H1 (cell line): ENCODE measurements at regions of chr4 and their contacts with region 1.

Region 1: DNA sequence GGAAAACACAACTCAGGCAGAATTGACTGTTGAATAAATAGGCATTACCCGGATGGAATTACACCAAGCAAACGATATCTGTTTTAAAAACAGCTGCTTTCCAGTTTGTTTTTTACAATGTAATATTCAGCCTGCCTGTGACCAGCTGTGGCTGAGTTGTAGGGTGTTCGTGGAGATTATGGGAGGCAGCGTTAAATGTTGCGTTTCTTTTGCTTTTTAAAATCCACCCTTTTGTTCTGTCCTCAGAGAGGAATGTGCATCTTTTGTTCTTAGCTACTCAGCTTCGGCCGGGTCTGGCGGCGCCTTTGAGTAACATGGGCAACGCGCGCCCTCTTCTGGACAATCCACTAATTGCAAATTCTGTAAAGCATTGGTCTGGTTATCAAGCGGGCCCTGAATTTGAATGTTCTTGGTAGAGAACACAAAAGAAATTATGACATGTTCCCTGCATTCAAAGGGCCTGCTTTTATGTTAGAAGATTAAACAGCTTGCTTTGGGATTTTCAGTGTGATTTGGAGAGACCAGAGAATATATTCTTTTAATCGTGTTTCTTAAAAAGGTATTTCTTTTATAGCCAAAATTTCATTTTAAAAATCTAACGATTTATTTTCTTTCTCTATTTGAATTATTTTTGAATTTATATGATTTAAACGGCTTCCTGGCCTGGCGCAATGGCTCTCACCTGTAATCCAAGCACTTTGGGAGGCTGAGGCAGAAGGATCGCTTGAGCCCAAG is 76.3 kb upstream of the TRIM2 start:
- DNase-seq: peak; percentile 63 to 96
- H3K4me3 ChIP-seq: peak overlapping the region in 3 of 4 experiments; percentile 3 to 42 (median 19); a peak in 4 of 8 replicates
- H3K27ac ChIP-seq: peak overlapping the region; percentile 1; the same call in 1 of the 2 replicates
- H3K4me1 ChIP-seq: peaks cover 0 to 7% (median 4%) of the 10 kb centered on the region in 4 experiments; a peak in 3 of 7 replicates
- H3K27me3 ChIP-seq: no peaks in the 10 kb centered on the region
- CTCF ChIP-seq: peak; percentile 42 to 84 (median 70)
- EP300 ChIP-seq: no peak
- POLR2A ChIP-seq: no peak
- RAD21 ChIP-seq: peak; percentile 94 to 97

Region 2: DNA sequence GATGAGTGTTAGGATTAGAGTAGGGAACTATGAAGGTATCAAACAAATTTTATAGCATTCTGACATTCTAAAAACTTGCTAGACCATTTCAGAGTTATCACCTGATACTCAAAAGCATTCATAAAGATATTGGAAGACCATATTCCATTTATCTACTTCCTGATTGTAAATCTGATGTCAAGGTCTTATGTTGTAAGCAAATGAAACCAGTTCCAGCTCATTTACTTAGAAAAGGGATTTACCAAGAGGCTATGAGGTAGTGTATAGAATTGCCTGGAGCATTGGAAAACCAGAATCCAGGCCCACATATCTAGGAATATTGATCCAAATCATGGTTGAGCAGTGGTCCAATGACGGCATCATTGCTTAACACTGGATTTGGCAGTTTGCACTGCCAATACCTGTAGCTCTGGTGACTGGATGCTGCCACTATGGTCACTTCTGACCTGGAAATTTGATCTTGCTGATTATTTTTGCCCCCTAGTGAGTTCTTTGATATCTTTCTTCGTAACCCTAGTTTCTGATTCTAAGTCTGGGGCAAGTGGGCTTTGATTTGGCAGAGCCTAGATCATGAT is 322.8 kb before region 1 on chr4:
- CTCF ChIA-PET with region 1: no interaction called
- POLR2A ChIA-PET with region 1: no interaction called
- DNase-seq: no peak
- H3K4me3 ChIP-seq: no peak overlapping the region
- H3K27ac ChIP-seq: no peak overlapping the region
- H3K4me1 ChIP-seq: peaks cover 0 to 12% (median 0%) of the 10 kb centered on the region in 4 experiments; a peak in 2 of 7 replicates
- H3K27me3 ChIP-seq: no peaks in the 10 kb centered on the region
- CTCF ChIP-seq: no peak
- EP300 ChIP-seq: no peak
- POLR2A ChIP-seq: no peak
- RAD21 ChIP-seq: no peak

Region 3: DNA sequence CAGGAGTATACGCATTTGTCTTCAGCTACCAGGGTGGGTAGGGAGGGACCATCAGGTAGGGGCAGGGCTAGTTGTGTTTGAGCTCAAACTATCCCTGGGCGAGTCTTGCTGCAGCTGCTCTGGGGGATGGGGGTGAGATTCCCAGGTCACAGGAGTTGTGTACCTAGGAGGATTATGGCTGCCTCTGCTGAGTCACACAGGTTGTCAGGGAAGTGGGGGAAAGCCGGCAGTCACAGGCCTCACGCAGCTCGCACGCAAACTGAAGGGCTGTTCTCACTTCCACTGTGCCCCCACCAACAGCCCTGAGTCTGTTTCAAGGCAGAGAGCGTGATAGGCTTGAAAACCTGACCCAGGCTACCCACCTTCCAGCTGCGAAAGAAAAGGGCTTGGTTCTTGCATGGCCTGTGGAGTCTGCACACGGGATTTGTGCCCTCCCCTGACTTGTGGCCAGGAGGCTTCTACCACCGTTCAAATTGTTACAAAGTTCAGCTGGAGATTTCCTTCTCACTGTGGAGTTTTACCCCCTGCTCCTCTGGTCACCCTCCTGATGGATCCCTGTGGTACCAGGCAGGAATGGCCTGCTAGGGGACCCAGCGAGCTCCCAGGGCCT is 284.3 kb before region 1 on chr4:
- CTCF ChIA-PET with region 1: interaction called, 59 read pairs
- POLR2A ChIA-PET with region 1: no interaction called
- DNase-seq: no peak
- H3K4me3 ChIP-seq: no peak overlapping the region
- H3K27ac ChIP-seq: no peak overlapping the region; the same call in 1 of the 2 replicates
- H3K4me1 ChIP-seq: peaks cover 0 to 3% (median 1%) of the 10 kb centered on the region in 4 experiments; a peak in 2 of 7 replicates
- H3K27me3 ChIP-seq: no peaks in the 10 kb centered on the region
- CTCF ChIP-seq: no peak
- EP300 ChIP-seq: no peak
- POLR2A ChIP-seq: no peak
- RAD21 ChIP-seq: no peak

Region 4: DNA sequence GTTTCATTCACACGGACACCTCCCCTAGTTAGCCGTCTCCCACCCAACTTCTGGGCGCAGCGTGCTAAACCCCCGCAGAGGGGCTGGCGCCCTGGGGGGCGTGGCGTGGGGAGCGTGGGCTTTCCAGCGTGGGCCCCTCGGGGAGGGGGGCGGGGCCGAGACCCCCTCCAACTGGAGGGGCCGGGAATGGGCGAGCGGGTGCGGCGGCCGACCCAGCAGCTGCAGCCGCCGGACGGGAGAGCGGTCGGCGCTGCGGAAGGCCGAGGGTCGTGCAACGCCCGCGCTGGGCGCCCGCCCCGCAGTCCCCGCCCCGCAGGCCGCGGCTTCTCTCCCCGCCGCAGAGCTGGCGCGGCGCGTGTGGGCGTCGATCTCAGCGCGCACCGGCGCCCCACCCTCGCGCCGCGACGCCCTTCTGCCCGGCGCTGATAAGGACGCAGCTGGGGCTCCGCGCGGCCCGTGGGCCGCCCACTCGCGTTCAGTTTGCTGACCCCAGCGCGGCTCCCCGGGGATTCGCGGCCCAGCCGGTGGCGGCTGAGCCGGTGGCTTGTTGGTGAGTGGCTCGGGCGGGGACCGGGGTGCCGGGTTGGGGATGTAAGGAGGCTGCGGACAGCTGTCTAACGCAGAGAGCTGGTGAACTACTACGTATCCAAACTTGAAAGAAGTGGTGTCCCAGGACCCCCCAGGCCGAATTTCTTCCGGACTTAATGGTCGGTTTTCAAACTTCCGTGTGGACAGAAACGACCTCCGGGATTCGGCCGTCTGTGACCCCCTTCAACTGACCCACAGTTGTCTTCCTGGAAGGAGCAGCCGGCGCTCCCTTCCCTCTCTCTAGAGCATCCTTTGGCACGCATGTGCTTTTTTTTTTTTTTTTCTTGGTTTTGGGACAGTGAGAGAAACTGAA is 190.3 kb before region 1 on chr4:
- CTCF ChIA-PET with region 1: interaction called, 16 read pairs
- POLR2A ChIA-PET with region 1: interaction called, 3 read pairs
- DNase-seq: peak in 1 of 2 experiments; percentile 63
- H3K4me3 ChIP-seq: peak overlapping the region; percentile 79 to 97 (median 82)
- H3K27ac ChIP-seq: no peak overlapping the region
- H3K4me1 ChIP-seq: peaks cover 0 to 8% (median 5%) of the 10 kb centered on the region in 4 experiments; a peak in 4 of 7 replicates
- H3K27me3 ChIP-seq: peaks cover 0 to 13% (median 5%) of the 10 kb centered on the region in 4 experiments; a peak in 3 of 7 replicates
- CTCF ChIP-seq: no peak
- EP300 ChIP-seq: no peak
- POLR2A ChIP-seq: no peak
- RAD21 ChIP-seq: no peak

Region 5: GRCh38 chr4:152988691-152989553 is 139.0 kb before region 1 on chr4:
- CTCF ChIA-PET with region 1: interaction called, 14 read pairs
- POLR2A ChIA-PET with region 1: no interaction called
- DNase-seq: no peak
- H3K4me3 ChIP-seq: no peak overlapping the region
- H3K27ac ChIP-seq: no peak overlapping the region
- H3K4me1 ChIP-seq: 0 out of 7 replicates have a peak, but pooled peaks cover 0 to 2% (median 0%) of the 10 kb centered on the region in 4 experiments
- H3K27me3 ChIP-seq: no peaks in the 10 kb centered on the region
- CTCF ChIP-seq: no peak
- EP300 ChIP-seq: no peak
- POLR2A ChIP-seq: no peak
- RAD21 ChIP-seq: no peak

Region 6: DNA sequence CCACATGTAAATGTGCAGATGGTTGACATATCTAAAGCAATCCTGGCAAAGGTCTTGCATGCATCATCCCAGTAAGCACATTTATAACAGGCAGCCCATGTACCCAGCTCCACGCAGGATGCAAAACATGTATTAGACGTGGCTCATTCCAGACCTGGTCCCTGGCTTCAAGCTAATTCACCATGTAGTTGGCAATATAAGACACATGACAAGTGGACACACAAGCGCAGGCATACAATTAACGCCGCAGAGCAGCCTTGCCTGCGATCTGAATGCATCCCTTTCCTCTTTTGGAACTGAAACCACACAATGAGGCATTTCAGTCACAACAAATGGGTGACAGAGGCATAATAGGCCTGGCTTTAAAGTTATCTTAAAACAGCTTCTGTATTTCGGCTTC is 38.2 kb before region 1 on chr4:
- CTCF ChIA-PET with region 1: interaction called, 82 read pairs
- POLR2A ChIA-PET with region 1: no interaction called
- DNase-seq: no peak
- H3K4me3 ChIP-seq: no peak overlapping the region
- H3K27ac ChIP-seq: no peak overlapping the region
- H3K4me1 ChIP-seq: peaks cover 2 to 10% (median 4%) of the 10 kb centered on the region in 4 experiments; a peak in 5 of 7 replicates
- H3K27me3 ChIP-seq: peaks cover 0 to 3% (median under 1%) of the 10 kb centered on the region in 4 experiments; a peak in 2 of 7 replicates
- CTCF ChIP-seq: no peak
- EP300 ChIP-seq: no peak
- POLR2A ChIP-seq: no peak
- RAD21 ChIP-seq: no peak

Region 7: DNA sequence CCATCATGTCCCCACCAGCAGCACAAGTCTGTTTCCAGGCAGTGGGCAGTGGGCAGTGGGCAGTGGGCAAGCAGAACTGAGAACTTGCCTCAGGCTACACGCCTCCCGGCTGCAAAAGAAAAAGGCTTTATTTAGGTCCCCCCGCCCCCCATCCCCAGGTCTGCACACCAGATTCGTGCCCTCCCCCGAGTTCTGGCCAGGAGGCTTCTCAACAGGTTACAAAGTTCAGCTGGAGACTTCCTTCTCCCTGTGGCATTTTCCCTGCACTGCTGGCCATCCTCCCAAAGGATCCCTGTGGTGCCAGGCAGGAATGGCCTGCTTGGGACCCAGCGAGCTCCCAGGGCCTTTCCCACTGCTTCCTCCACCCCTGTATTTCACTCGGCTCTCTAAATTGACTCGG is 20.7 kb before region 1 on chr4:
- CTCF ChIA-PET with region 1: interaction called, 72 read pairs
- POLR2A ChIA-PET with region 1: interaction called, 4 read pairs
- DNase-seq: no peak
- H3K4me3 ChIP-seq: no peak overlapping the region
- H3K27ac ChIP-seq: no peak overlapping the region
- H3K4me1 ChIP-seq: peaks cover 0 to 4% (median 0%) of the 10 kb centered on the region in 4 experiments; a peak in 1 of 7 replicates
- H3K27me3 ChIP-seq: no peaks in the 10 kb centered on the region; a peak in 1 of 7 replicates
- CTCF ChIP-seq: no peak
- EP300 ChIP-seq: no peak
- POLR2A ChIP-seq: no peak
- RAD21 ChIP-seq: no peak

Region 8: DNA sequence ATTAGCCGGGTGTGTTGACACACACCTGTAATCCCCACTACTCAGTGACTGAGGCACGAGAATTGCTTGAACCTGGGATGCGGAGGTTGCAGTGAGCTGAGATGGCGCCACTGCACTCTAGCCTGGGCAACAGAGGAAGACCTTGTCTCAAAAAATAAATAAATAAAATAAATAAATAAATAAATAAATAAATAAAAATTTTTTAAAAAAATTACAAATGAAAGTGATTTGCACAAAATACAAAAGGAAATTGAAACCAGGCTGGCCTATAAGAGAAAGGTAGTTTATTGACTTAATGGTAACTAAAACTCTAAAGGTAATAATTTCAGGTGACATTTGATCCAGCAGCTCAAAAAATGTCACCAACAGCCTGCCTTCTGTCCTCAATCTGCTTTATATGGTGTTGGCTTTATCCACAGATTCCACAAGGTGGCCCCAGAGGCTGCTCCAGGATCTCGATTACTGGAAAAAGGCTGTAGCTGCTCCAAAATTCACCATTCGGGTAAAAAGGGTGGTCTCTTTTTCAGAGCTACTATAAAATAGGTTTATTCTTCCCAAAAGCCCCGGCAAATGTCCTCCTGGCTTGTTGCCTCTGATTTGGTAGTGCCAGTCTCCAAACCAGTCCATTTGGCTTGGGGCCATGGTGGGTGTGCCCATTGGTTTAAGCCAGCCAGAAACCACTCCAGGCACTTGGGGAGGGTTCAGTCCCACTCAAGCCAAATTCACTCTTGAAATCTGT is 14.9 kb after region 1 on chr4:
- CTCF ChIA-PET with region 1: interaction called, 20 read pairs
- POLR2A ChIA-PET with region 1: interaction called, 3 read pairs
- DNase-seq: peak in 1 of 2 experiments; percentile 68
- H3K4me3 ChIP-seq: no peak overlapping the region
- H3K27ac ChIP-seq: no peak overlapping the region
- H3K4me1 ChIP-seq: peaks cover 3 to 8% (median 4%) of the 10 kb centered on the region in 4 experiments; a peak in 4 of 7 replicates
- H3K27me3 ChIP-seq: no peaks in the 10 kb centered on the region
- CTCF ChIP-seq: peak; percentile 39 to 84 (median 81)
- EP300 ChIP-seq: no peak
- POLR2A ChIP-seq: no peak
- RAD21 ChIP-seq: peak; percentile 95 to 97